Ascending aorta (tissue), 2 donors: ENCODE measurements at regions of chr1 and their contacts with region 1.

Region 1: GRCh38 chr1:29124366-29125236 is 898 bp upstream of the TMEM200B start:
- DNase-seq: peak; percentile 16 to 92
- H3K4me3 ChIP-seq: peak overlapping the region; percentile 83 to 94
- H3K27ac ChIP-seq: peak overlapping the region; percentile 99
- H3K4me1 ChIP-seq: peaks cover 3 to 27% of the 10 kb centered on the region in 2 donors
- H3K27me3 ChIP-seq: no peaks in the 10 kb centered on the region
- CTCF ChIP-seq: peak; percentile 91 to 99 (median 94)

Region 2: GRCh38 chr1:27365372-27366112 is 1759.1 kb before region 1 on chr1:
- intact Hi-C with region 1: loop called (anchors 10 kb)
- DNase-seq: peak; percentile 66 to 95
- H3K4me3 ChIP-seq: peak overlapping the region; percentile 70 to 96
- H3K27ac ChIP-seq: peak overlapping the region; percentile 97 to 99
- H3K4me1 ChIP-seq: peaks cover 21 to 23% of the 10 kb centered on the region in 2 donors
- H3K27me3 ChIP-seq: no peaks in the 10 kb centered on the region
- CTCF ChIP-seq: no peak

Region 3: GRCh38 chr1:28648474-28649198 is 476.0 kb before region 1 on chr1 and contains the start of gene RNU11:
- intact Hi-C with region 1: loop called (anchors 5 kb)
- DNase-seq: peak; percentile 72 to 95
- H3K4me3 ChIP-seq: peak within 1 kb of the TSS; percentile 39 to 59
- H3K27ac ChIP-seq: peak within 1 kb of the TSS; percentile 85 to 89
- H3K4me1 ChIP-seq: peaks cover 3 to 19% of the 10 kb centered on the region in 2 donors
- H3K27me3 ChIP-seq: no peaks in the 10 kb centered on the region
- CTCF ChIP-seq: no peak
- total RNA-seq, gene RNU11: not detected

Region 4: DNA sequence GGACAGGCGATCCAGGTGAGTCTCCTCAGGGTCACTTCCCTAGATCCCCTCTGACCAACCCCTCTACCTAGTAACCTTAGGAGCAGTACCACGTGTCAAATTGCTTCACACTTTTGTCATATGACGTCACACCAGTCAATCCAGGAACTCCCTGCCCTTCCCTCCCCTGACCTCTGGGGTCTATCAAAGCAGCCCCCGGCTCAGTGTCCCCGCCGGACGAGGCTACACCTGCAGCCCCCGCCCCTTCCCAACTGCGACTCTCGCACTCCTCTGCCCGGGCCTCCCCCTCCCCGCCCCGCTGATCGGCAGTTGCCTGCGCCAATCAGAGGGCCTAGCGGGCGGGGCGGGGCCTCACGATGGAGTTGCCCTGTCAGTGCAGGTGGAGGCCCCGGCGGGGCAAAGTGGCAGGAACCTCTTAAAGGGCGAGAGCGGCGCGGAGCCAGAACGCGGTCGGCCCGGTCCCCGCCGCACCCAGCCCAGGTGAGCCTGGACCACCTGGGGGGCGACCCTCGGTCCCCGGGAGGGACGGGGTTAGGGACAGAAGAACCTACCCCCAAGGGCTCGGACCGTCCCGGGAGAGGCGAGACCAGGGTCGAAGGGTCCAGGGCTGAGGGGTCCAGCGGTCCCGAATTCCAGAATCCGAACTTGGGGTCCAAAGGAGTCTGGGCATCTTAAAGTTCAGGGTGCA is 237.7 kb before region 1 on chr1:
- intact Hi-C with region 1: loop called (anchors 2 kb)
- DNase-seq: peak; percentile 53 to 92
- H3K4me3 ChIP-seq: peak overlapping the region; percentile 90 to 94
- H3K27ac ChIP-seq: peak overlapping the region; percentile 62 to 63
- H3K4me1 ChIP-seq: peaks cover 7 to 24% of the 10 kb centered on the region in 2 donors
- H3K27me3 ChIP-seq: no peaks in the 10 kb centered on the region
- CTCF ChIP-seq: no peak

Region 5: GRCh38 chr1:28902738-28903137 is 221.9 kb before region 1 on chr1:
- intact Hi-C with region 1: no loop called
- DNase-seq: no peak
- H3K4me3 ChIP-seq: no peak overlapping the region
- H3K27ac ChIP-seq: no peak overlapping the region
- H3K4me1 ChIP-seq: peaks cover 0 to 11% of the 10 kb centered on the region in 2 donors
- H3K27me3 ChIP-seq: no peaks in the 10 kb centered on the region
- CTCF ChIP-seq: no peak

Region 6: GRCh38 chr1:29050166-29050565 is 74.4 kb before region 1 on chr1:
- intact Hi-C with region 1: loop called (anchors 5 kb)
- DNase-seq: no peak
- H3K4me3 ChIP-seq: no peak overlapping the region
- H3K27ac ChIP-seq: peak overlapping the region in 1 of 2 donors; percentile 19
- H3K4me1 ChIP-seq: peaks cover 0 to 30% of the 10 kb centered on the region in 2 donors
- H3K27me3 ChIP-seq: no peaks in the 10 kb centered on the region
- CTCF ChIP-seq: no peak

Region 7: DNA sequence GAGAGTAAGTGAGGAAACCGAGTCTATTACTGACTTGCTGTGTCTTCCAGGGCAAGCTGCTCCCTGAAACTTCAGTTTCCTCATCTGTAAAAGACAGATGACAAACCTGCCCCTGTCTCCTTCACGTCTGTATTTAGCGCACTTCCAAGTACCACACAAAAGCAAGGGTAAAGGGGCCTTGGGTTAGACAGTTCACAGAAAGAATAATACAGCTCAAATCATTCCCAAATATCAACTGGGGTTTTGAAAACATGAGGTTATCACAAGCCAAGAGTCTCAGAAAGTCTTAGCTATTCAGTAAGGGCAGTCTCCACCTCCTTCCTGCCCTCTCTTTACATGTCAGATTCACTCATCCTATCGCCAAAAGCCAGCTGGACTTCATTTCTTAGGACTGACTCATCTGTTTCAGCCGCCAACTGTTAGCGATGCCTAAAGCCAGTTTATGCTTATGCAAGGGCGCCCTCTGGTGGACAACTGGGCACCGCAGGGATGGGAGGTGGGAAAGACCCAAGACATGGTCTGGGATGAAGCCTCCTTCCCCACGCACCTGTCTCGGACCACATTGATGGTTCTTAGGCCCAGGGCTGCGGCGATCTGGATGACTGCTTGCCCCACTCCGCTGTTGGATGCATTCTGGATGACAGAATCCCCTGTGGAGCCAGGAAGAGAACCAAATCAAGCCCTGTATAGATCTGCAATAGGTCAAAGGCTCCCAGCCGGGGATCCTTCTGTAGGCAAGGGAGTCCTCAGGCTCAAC is 78.2 kb after region 1 on chr1:
- intact Hi-C with region 1: loop called (anchors 2 kb)
- DNase-seq: peak; percentile 81 to 98
- H3K4me3 ChIP-seq: no peak overlapping the region
- H3K27ac ChIP-seq: peak overlapping the region; percentile 90 to 91
- H3K4me1 ChIP-seq: peaks cover 0 to 7% of the 10 kb centered on the region in 2 donors
- H3K27me3 ChIP-seq: no peaks in the 10 kb centered on the region
- CTCF ChIP-seq: peak; percentile 86 to 94 (median 89)

Region 8: GRCh38 chr1:29218223-29218622 is 93.6 kb after region 1 on chr1:
- intact Hi-C with region 1: no loop called
- DNase-seq: no peak
- H3K4me3 ChIP-seq: no peak overlapping the region
- H3K27ac ChIP-seq: no peak overlapping the region
- H3K4me1 ChIP-seq: no peaks in the 10 kb centered on the region
- H3K27me3 ChIP-seq: no peaks in the 10 kb centered on the region
- CTCF ChIP-seq: no peak

Region 9: GRCh38 chr1:29703596-29704370 is 579.2 kb after region 1 on chr1:
- intact Hi-C with region 1: loop called (anchors 10 kb)
- DNase-seq: no peak
- H3K4me3 ChIP-seq: no peak overlapping the region
- H3K27ac ChIP-seq: no peak overlapping the region
- H3K4me1 ChIP-seq: peaks cover 9 to 13% of the 10 kb centered on the region in 2 donors
- H3K27me3 ChIP-seq: no peaks in the 10 kb centered on the region
- CTCF ChIP-seq: peak; percentile 11 to 74 (median 62)